ENCODE measurements at regions of chr9 and their contacts with region 1.

Region 1: GRCh38 chr9:99889121-99889520 is 17.3 kb upstream of the STX17 start:
- DNase-seq: no peak
- ATAC-seq: no peak
- H3K4me3 ChIP-seq: no peak overlapping the region
- H3K4me3 Mint-ChIP-seq: no peak overlapping the region
- H3K27ac ChIP-seq: no peak overlapping the region
- H3K27ac Mint-ChIP-seq: no peak overlapping the region
- H3K4me1 ChIP-seq: no peaks in the 10 kb centered on the region
- H3K4me1 Mint-ChIP-seq: no peaks in the 10 kb centered on the region
- H3K27me3 ChIP-seq: no peaks in the 10 kb centered on the region
- H3K27me3 Mint-ChIP-seq: peaks cover 0 to 4% of the 10 kb centered on the region in 2 donors

Region 2: DNA sequence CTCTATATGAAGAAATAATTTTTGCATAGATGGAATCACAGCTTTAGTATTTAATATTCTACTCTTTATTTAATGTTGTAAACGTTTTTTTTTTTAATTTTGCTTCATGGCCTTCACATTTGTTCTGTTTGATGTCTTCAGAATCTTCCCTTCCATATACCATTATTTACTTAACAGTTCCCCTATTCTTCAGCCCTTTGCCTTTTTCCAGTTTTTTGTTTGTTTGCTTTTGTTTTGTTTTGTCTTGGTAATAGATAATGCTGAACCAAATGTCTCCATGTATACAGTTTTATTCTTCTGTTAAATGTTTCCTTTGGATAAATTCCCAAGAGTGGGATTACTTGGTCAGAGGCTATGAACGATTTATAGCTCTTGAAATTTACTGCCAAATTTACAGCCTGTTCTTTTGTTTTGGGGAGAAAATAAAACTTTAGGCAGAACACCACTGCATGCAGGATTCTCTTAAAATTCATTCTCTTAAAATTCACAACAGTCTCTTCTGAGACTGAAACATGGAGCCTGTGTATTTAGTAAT is 28.9 kb before region 1 on chr9:
- CTCF ChIA-PET with region 1: interaction called in 1 of 2 experiments, 3 read pairs
- POLR2A ChIA-PET with region 1: interaction called in 1 of 2 experiments, 11 read pairs
- DNase-seq: no peak
- ATAC-seq: no peak
- H3K4me3 ChIP-seq: no peak overlapping the region
- H3K4me3 Mint-ChIP-seq: no peak overlapping the region
- H3K27ac ChIP-seq: no peak overlapping the region
- H3K27ac Mint-ChIP-seq: no peak overlapping the region
- H3K4me1 ChIP-seq: no peaks in the 10 kb centered on the region
- H3K4me1 Mint-ChIP-seq: no peaks in the 10 kb centered on the region
- H3K27me3 ChIP-seq: no peaks in the 10 kb centered on the region
- H3K27me3 Mint-ChIP-seq: no peaks in the 10 kb centered on the region

Measured in T-cell (primary cell).